A673 (cell line): ENCODE measurements at regions of chr11 and their contacts with region 1.

Region 1: DNA sequence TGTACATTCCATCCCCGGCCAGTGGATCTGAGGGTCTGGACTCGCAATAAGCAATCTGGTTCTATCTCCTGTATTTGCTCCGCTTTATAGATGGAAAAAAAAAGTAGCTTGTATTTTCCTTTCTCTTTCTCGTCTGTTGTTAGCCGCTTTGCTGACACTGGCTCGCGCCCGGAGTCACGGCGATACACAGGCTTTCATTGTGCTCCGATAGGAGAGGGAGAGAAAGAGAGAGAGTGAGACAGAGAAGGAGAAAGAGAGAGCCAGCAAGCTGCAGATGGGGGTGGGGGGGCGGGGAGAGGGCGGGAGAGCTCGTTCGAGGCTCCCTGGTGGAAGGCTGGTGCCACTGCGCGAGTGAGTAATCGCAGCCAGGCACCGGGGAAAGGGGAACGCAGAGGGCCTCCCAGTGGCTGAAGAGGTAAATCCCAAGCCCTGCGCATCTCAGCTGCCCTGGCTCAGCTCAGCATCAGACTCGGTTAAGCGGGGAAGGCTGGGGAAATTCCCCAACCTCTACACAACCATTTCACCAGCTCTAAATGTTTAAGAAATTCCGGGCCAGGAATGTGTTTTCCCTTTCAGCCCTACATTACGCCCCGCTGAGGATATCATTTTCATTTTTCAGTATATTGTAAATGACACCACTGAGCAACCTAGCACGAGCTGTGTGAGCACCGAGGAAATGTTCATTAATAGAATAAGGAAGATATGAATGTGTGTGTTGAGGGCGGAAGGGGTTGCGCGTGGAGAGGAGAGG is at the start of gene MAML2:
- DNase-seq: peak; percentile 99
- H3K4me3 ChIP-seq: peak within 1 kb of the TSS; percentile 61
- H3K27ac ChIP-seq: peak within 1 kb of the TSS; percentile 66
- H3K4me1 ChIP-seq: peaks cover 36% of the 10 kb centered on the region
- H3K27me3 ChIP-seq: no peaks in the 10 kb centered on the region
- CTCF ChIP-seq: peak; percentile 90
- total RNA-seq, gene MAML2: 6.4 and 7.9 TPM in 2 replicates

Region 2: DNA sequence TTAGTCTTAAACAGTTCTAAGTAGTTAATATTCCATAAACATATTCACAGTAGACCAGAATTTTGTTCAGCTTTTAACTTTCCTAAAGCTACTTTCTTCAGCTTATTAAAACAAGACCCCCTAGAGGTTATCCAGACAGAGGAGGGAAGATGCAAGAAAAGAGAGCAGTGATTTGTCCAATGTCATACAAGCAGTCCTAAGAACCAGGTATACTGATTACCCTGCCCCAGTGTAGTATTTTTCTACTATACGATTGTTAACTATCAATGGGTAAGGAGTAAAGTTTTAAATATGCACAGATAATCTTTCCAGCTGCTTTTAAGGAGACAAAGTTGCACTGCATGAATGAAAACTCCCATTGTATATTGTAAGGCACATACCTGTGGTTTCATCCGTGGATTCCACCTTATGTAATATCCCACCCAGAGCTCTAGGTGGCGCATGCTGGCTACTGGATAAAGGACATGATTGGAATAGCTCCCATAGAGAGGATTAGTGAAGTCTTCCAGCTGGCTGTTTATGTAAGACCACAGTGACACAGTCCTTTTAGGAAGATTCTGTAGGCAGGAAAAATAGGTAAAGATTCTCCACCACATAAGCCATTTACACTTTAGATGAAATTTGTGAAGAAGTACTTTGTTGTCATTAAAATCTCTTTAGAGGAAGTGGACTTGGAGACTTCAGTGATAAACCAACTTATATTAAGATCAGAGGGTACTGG is 507.2 kb before region 1 on chr11:
- CTCF ChIA-PET with region 1: interaction called, 18 read pairs
- POLR2A ChIA-PET with region 1: no interaction called
- intact Hi-C with region 1: loop called (anchors 5 kb)
- DNase-seq: peak; percentile 93
- H3K4me3 ChIP-seq: no peak overlapping the region
- H3K27ac ChIP-seq: peak overlapping the region; percentile 39
- H3K4me1 ChIP-seq: peaks cover 16% of the 10 kb centered on the region
- H3K27me3 ChIP-seq: no peaks in the 10 kb centered on the region
- CTCF ChIP-seq: peak; percentile 99

Region 3: GRCh38 chr11:95849087-95849825 is 493.9 kb before region 1 on chr11:
- CTCF ChIA-PET with region 1: interaction called, 24 read pairs
- POLR2A ChIA-PET with region 1: no interaction called
- intact Hi-C with region 1: no loop called
- DNase-seq: peak; percentile 77
- H3K4me3 ChIP-seq: no peak overlapping the region
- H3K27ac ChIP-seq: no peak overlapping the region
- H3K4me1 ChIP-seq: no peaks in the 10 kb centered on the region
- H3K27me3 ChIP-seq: no peaks in the 10 kb centered on the region
- CTCF ChIP-seq: peak; percentile 66

Region 4: DNA sequence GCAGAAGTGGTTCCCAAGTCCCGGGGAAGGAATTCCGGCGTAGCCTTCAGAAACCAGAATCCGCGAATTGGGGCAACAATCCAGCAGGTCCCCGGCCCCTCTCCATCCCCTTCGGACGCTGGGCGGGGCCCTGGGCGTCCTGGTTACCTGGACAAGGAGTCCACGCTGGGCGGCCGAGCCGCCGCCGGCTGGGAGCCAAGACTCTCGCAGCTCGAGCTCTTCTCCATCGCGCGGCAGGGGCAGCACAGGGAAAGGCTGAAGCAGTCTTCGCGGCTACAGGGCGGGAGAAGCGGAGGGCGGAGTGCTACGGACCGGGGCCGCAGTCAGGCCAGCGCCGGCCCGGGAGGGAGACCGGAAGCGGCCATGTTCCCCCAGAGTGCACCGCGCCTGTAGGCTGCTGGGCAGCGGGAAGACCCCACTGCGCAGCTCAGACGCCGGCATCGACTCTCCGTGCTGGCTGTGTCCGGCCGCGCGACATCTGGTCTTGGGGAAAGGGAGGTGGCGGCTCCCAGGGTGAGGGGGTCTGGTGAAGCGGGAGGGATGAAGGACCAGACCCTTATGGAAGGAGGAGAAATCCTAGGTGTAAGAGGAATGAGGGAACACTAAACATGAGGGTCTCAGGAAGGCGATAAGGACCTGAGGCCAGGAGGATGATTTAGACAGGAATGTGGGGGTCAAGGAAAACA is 419.3 kb before region 1 on chr11 and contains the start of gene MTMR2:
- CTCF ChIA-PET with region 1: no interaction called
- POLR2A ChIA-PET with region 1: interaction called, 13 read pairs
- intact Hi-C with region 1: loop called (anchors 2 kb)
- DNase-seq: peak; percentile 78
- H3K4me3 ChIP-seq: peak within 1 kb of the TSS; percentile 97
- H3K27ac ChIP-seq: peak within 1 kb of the TSS; percentile 89
- H3K4me1 ChIP-seq: peaks cover 18% of the 10 kb centered on the region
- H3K27me3 ChIP-seq: no peaks in the 10 kb centered on the region
- CTCF ChIP-seq: no peak
- total RNA-seq, gene MTMR2: 52.4 and 58.6 TPM in 2 replicates

Region 5: DNA sequence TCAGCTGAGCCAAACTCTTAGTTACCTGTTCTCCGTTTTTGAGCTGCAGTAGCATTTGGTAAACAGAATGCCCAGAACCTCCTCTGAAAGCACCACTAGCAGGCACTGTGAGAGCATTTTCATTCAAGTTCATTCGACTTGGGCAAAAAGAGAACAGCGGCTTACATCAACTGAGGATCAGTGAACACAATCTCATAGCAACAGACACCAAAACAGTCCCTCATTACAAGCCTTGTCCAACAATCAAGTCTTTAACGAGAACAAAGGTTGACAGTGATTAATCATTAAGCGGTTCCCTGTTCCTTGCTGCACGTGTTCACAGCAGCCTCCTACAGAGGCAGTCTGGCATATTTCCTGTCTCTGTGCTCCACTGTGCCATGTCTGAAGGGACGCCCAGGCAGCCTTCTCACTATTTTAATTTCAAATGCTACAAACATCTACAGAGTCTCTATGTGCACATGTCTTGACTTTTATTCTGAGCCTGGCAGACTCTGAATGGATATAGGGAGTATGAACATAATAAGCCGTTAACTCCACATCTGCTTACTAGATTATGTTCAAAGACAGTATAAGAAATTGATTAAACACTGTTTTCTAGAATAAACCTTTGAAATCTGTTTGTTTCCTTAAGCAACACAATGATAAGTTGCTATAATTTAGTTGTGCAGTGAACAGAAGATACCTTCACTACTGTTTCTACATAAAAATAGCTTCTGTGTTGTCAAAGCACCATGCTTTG is 330.9 kb before region 1 on chr11:
- CTCF ChIA-PET with region 1: interaction called, 7 read pairs
- POLR2A ChIA-PET with region 1: no interaction called
- intact Hi-C with region 1: loop called (anchors 2 kb)
- DNase-seq: peak; percentile 86
- H3K4me3 ChIP-seq: no peak overlapping the region
- H3K27ac ChIP-seq: no peak overlapping the region
- H3K4me1 ChIP-seq: peaks cover 14% of the 10 kb centered on the region
- H3K27me3 ChIP-seq: no peaks in the 10 kb centered on the region
- CTCF ChIP-seq: peak; percentile 84

Region 6: GRCh38 chr11:96054870-96055705 is 288.0 kb before region 1 on chr11:
- CTCF ChIA-PET with region 1: interaction called, 55 read pairs
- POLR2A ChIA-PET with region 1: no interaction called
- intact Hi-C with region 1: loop called (anchors 2 kb)
- DNase-seq: peak; percentile 70
- H3K4me3 ChIP-seq: no peak overlapping the region
- H3K27ac ChIP-seq: no peak overlapping the region
- H3K4me1 ChIP-seq: peaks cover 38% of the 10 kb centered on the region
- H3K27me3 ChIP-seq: no peaks in the 10 kb centered on the region
- CTCF ChIP-seq: peak; percentile 79

Region 7: DNA sequence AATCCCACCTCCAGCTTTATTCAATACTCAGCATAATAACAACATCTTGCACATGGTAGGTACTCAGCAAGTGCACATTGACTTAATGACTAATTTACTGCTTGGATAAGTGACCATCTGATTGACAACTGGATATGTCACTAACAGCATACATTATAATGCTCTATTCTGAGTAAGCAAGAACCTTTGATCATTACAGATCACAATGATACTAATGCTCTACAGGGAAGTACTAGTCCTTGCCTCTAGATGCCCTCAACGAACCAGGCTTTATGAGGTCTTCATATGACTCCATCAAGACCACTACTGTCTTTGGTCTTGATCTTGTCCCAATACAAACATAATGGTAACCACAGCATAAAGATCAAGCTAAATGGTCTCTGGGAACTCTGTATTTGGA is 251.7 kb before region 1 on chr11:
- CTCF ChIA-PET with region 1: interaction called, 15 read pairs
- POLR2A ChIA-PET with region 1: no interaction called
- intact Hi-C with region 1: no loop called
- DNase-seq: peak; percentile 49
- H3K4me3 ChIP-seq: no peak overlapping the region
- H3K27ac ChIP-seq: no peak overlapping the region
- H3K4me1 ChIP-seq: peaks cover 9% of the 10 kb centered on the region
- H3K27me3 ChIP-seq: no peaks in the 10 kb centered on the region
- CTCF ChIP-seq: peak; percentile 51